GM23248 (cell line): ENCODE measurements at regions of chrX and their contacts with region 1.

Region 1: GRCh38 chrX:118807151-118808017 is 16.2 kb upstream of the ZCCHC12 start:
- DNase-seq: peak; percentile 65
- H3K4me3 ChIP-seq: no peak overlapping the region
- H3K27ac ChIP-seq: no peak overlapping the region
- H3K4me1 ChIP-seq: no peaks in the 10 kb centered on the region
- H3K27me3 ChIP-seq: no peaks in the 10 kb centered on the region

Region 2: GRCh38 chrX:118459494-118459893 is 347.9 kb before region 1 on chrX:
- in situ Hi-C with region 1: loop called (anchors 25 kb)
- DNase-seq: peak; percentile 65
- H3K4me3 ChIP-seq: no peak overlapping the region
- H3K27ac ChIP-seq: no peak overlapping the region
- H3K4me1 ChIP-seq: no peaks in the 10 kb centered on the region
- H3K27me3 ChIP-seq: no peaks in the 10 kb centered on the region

Region 3: GRCh38 chrX:118627084-118627758 is 180.2 kb before region 1 on chrX:
- in situ Hi-C with region 1: loop called (anchors 10 kb)
- DNase-seq: peak; percentile 25
- H3K4me3 ChIP-seq: no peak overlapping the region
- H3K27ac ChIP-seq: no peak overlapping the region
- H3K4me1 ChIP-seq: 0 out of 2 replicates have a peak, but pooled peaks cover 4% of the 10 kb centered on the region
- H3K27me3 ChIP-seq: no peaks in the 10 kb centered on the region

Region 4: DNA sequence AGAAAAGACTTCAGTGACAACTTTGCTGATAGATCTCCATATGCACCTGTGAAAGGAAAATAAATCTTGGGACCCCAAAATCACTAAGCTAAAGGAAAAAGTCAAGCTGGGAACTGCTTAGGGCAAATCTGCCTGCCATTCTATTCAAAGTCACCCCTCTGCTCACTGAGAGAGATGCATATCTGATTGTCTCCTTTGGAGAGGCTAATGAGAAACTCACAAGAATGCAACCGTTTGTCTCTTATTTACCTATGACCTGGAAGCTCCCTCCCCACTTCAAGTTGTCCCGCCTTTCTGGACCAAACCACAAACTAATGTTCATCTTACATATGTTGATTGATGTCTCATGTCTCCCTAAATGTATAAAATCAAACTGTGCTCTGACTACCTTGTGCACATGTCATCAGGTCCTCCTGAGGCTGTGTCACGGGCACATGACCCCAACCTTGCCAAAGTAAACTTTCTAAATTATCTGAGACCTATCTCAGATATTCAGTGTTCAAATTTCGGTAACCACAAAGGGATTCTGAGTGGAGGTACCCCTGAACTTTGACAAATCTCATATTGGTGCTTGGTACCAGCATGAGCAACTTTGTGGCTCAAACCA is 502.4 kb after region 1 on chrX:
- in situ Hi-C with region 1: no loop called
- DNase-seq: no peak
- H3K4me3 ChIP-seq: no peak overlapping the region
- H3K27ac ChIP-seq: no peak overlapping the region
- H3K4me1 ChIP-seq: no peaks in the 10 kb centered on the region
- H3K27me3 ChIP-seq: no peaks in the 10 kb centered on the region